ENCODE measurements at regions of chr17 and their contacts with region 1.

Region 1: GRCh38 chr17:6753006-6753445 is 2.8 kb upstream of the XAF1 start:
- DNase-seq: peak; percentile 66
- H3K4me3 ChIP-seq: no peak overlapping the region
- H3K27ac ChIP-seq: peak overlapping the region; percentile 92
- H3K4me1 ChIP-seq: peaks cover 24% of the 10 kb centered on the region
- H3K27me3 ChIP-seq: no peaks in the 10 kb centered on the region
- CTCF ChIP-seq: no peak

Region 2: GRCh38 chr17:6796887-6797490 is 44.0 kb after region 1 on chr17:
- CTCF ChIA-PET with region 1: interaction called, 3 read pairs
- dilution Hi-C with region 1: no loop called
- in situ Hi-C with region 1: no loop called
- intact Hi-C with region 1: loop called (anchors 2 kb)
- DNase-seq: peak; percentile 94
- H3K4me3 ChIP-seq: no peak overlapping the region
- H3K27ac ChIP-seq: peak overlapping the region; percentile 6
- H3K4me1 ChIP-seq: peaks cover 21% of the 10 kb centered on the region
- H3K27me3 ChIP-seq: no peaks in the 10 kb centered on the region
- CTCF ChIP-seq: no peak

Region 3: GRCh38 chr17:7004398-7005253 is 251.6 kb after region 1 on chr17:
- CTCF ChIA-PET with region 1: no interaction called
- dilution Hi-C with region 1: no loop called
- in situ Hi-C with region 1: no loop called
- intact Hi-C with region 1: loop called (anchors 1 kb)
- DNase-seq: peak; percentile 69
- H3K4me3 ChIP-seq: no peak overlapping the region
- H3K27ac ChIP-seq: no peak overlapping the region
- H3K4me1 ChIP-seq: no peaks in the 10 kb centered on the region
- H3K27me3 ChIP-seq: no peaks in the 10 kb centered on the region
- CTCF ChIP-seq: peak; percentile 66 to 69